ENCODE measurements at regions of chr9 and their contacts with region 1.

Region 1: GRCh38 chr9:75027187-75028107 is 646 bp downstream of the CARNMT1 start:
- DNase-seq: peak; percentile 65
- ATAC-seq: peak; percentile 43
- H3K4me3 Mint-ChIP-seq: peak overlapping the region; percentile 95
- H3K27ac Mint-ChIP-seq: peak overlapping the region; percentile 98
- H3K4me1 Mint-ChIP-seq: peaks cover 44% of the 10 kb centered on the region
- H3K27me3 Mint-ChIP-seq: no peaks in the 10 kb centered on the region

Region 2: GRCh38 chr9:74952281-74953151 is 74.9 kb before region 1 on chr9 and contains the start of gene C9orf40:
- CTCF ChIA-PET with region 1: interaction called, 17 read pairs
- POLR2A ChIA-PET with region 1: interaction called, 29 read pairs
- DNase-seq: peak; percentile 92
- ATAC-seq: peak; percentile 92
- H3K4me3 Mint-ChIP-seq: peak within 1 kb of the TSS; percentile 98
- H3K27ac Mint-ChIP-seq: peak within 1 kb of the TSS; percentile 97
- H3K4me1 Mint-ChIP-seq: peaks cover 40% of the 10 kb centered on the region
- H3K27me3 Mint-ChIP-seq: no peaks in the 10 kb centered on the region
- total RNA-seq, gene C9orf40: 22.9 TPM

Region 3: DNA sequence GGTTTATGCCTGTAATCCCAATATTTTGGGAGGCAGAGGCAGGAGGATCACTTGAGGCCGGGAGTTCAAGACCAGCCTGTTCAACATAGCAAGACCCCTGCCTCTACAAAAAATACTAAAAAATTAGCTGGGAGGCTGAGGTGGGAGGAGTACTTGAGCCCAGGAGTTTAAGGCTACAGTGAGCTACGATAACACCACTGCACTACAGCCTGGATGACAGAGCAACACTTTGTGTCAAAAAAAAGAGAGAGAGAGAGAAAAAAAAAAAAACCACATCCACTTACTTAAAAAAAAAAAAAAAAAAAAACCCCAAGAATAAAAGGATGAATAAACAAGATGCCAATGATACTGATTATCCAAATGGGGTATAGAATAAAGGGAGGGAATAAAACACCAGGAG is 13.7 kb before region 1 on chr9:
- CTCF ChIA-PET with region 1: interaction called, 25 read pairs
- POLR2A ChIA-PET with region 1: interaction called, 4 read pairs
- DNase-seq: no peak
- ATAC-seq: no peak
- H3K4me3 Mint-ChIP-seq: no peak overlapping the region
- H3K27ac Mint-ChIP-seq: peak overlapping the region; percentile 13
- H3K4me1 Mint-ChIP-seq: peaks cover 33% of the 10 kb centered on the region
- H3K27me3 Mint-ChIP-seq: no peaks in the 10 kb centered on the region

Region 4: GRCh38 chr9:75039009-75039408 is 11.6 kb after region 1 on chr9:
- CTCF ChIA-PET with region 1: interaction called, 10 read pairs
- POLR2A ChIA-PET with region 1: no interaction called
- DNase-seq: no peak
- ATAC-seq: no peak
- H3K4me3 Mint-ChIP-seq: no peak overlapping the region
- H3K27ac Mint-ChIP-seq: no peak overlapping the region
- H3K4me1 Mint-ChIP-seq: no peaks in the 10 kb centered on the region
- H3K27me3 Mint-ChIP-seq: peaks cover 11% of the 10 kb centered on the region

Region 5: DNA sequence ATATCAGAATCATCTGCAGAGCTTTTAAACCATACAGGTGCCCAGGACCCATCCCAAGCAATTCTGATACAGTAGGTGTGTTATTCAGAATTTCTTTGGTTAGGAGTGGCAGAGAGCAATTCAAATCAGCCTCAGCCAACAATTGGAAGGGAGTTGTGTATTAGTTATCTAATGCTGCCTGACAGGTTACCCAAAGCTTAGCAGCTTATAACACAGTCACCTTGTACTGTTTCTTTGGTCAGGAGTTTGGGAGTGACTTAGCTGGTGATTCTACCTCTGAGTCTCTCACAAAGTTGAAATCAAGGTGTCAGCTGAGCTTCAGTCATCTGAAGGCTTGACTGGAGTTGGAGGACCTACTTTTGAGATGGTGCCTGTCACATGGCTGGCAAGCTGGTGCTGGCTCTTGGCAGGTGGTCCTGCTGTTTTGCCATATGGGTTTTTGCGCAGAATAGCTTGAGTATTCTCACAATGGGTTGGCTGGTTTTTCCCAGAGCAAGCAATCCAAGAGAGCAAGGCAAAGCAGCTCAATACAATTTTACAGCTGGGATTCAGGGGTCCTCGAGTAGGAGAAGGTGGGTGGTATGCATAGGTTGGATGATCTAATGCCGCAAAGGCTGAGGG is 19.4 kb after region 1 on chr9:
- CTCF ChIA-PET with region 1: interaction called, 10 read pairs
- POLR2A ChIA-PET with region 1: no interaction called
- DNase-seq: no peak
- ATAC-seq: no peak
- H3K4me3 Mint-ChIP-seq: no peak overlapping the region
- H3K27ac Mint-ChIP-seq: no peak overlapping the region
- H3K4me1 Mint-ChIP-seq: no peaks in the 10 kb centered on the region
- H3K27me3 Mint-ChIP-seq: peaks cover 16% of the 10 kb centered on the region

Region 6: DNA sequence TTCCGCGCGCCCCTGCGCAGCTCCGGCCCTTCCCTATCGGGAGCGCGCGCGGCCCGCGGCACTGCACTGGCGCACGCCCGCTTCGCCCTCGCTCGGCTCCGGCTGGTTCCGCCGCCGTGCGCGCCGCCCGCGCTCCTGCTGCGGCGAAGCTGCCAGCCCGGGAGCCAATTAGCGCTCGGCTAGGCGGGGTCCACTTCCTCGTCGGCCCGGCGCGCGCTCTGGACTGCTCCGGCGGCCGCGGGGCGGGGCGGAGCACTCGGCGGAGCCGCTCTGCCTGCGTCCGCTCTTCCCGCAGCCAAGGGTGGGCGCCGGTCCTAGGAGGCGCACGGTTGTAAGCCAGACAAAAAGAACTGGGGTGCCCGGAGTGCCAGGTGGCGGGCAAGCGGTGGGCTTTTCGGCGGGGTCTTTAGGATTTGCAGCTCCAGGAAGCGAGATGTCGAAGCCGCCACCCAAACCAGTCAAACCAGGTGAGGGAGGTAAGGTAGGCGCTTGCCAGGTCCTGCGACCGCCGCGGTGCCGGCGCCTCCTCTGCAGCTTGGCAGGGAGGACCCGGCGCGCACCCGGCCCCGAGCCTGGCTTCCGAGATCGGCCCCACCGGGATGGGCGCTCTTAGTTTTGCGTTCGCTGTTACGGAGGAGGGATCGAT is 60.9 kb after region 1 on chr9 and contains the start of gene OSTF1:
- CTCF ChIA-PET with region 1: interaction called, 27 read pairs
- POLR2A ChIA-PET with region 1: interaction called, 24 read pairs
- DNase-seq: peak; percentile 94
- ATAC-seq: peak; percentile 92
- H3K4me3 Mint-ChIP-seq: peak within 1 kb of the TSS; percentile 95
- H3K27ac Mint-ChIP-seq: peak within 1 kb of the TSS; percentile 97
- H3K4me1 Mint-ChIP-seq: peaks cover 62% of the 10 kb centered on the region
- H3K27me3 Mint-ChIP-seq: no peaks in the 10 kb centered on the region
- total RNA-seq, gene OSTF1: 126 to 132 TPM